Panc1 (cell line): ENCODE measurements at regions of chr14 and their contacts with region 1.

Region 1: DNA sequence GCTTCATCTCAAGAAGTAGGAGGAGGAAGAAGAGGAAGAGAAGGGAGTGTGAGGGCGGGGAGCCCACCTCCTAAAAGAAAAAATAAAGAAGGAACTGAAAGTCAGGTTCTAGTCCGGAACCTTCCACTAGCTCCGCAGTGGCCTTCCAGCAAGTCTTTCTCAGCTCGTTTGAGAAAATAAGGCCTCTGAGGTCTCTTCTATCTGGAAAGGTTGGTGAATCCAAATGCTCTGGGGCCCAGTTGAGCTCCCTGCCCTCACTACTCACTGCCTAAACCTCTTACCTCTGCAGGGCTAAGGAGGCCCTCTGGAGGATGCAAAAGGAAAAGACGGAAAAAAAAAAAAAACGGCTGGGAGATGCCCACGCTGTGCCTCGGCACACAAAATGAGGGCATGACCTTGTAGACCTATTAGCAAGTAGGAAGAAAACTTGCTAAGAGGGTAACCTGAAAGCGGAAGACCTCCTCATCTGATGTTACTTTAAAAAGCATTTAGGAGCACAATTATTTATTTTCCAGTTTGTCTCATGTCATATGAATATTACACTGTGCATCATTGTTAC is 35.9 kb downstream of the FBLN5 start:
- DNase-seq: no peak
- ATAC-seq: peak; percentile 82
- H3K4me3 ChIP-seq: no peak overlapping the region
- H3K27ac ChIP-seq: no peak overlapping the region
- H3K4me1 ChIP-seq: no peaks in the 10 kb centered on the region
- H3K27me3 ChIP-seq: no peaks in the 10 kb centered on the region
- CTCF ChIP-seq: peak; percentile 75

Region 2: GRCh38 chr14:91510174-91511042 is 401.1 kb before region 1 on chr14 and contains the start of gene PPP4R3A:
- CTCF ChIA-PET with region 1: no interaction called
- POLR2A ChIA-PET with region 1: no interaction called
- in situ Hi-C with region 1: no loop called
- intact Hi-C with region 1: loop called (anchors 5 kb)
- DNase-seq: peak; percentile 60
- ATAC-seq: peak; percentile 95
- H3K4me3 ChIP-seq: peak within 1 kb of the TSS; percentile 84 to 90
- H3K27ac ChIP-seq: peak within 1 kb of the TSS; percentile 92
- H3K4me1 ChIP-seq: no peaks in the 10 kb centered on the region; the same call in 1 of the 2 replicates
- H3K27me3 ChIP-seq: no peaks in the 10 kb centered on the region
- CTCF ChIP-seq: no peak
- total RNA-seq, gene PPP4R3A: 54.8 TPM

Region 3: DNA sequence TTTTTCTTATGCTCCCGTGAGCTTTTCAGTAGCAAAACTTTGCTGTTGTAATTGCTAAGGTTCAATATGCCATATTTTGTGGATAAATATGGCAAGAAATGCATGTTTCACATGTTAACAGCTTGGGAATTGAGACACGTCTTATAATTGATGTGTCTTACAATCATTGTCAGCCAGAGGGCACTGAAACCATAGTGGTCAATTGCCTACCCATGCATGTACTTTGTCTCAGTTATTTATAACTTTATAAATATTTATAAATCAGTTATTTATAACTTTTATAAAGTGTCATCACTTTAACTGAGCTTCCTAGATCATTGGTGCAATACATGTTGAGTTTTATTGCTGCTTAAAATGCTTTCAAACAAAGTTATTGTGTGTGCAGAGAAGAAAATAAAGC is 261.6 kb before region 1 on chr14:
- CTCF ChIA-PET with region 1: no interaction called
- POLR2A ChIA-PET with region 1: no interaction called
- in situ Hi-C with region 1: no loop called
- intact Hi-C with region 1: loop called (anchors 5 kb)
- DNase-seq: no peak
- ATAC-seq: no peak
- H3K4me3 ChIP-seq: no peak overlapping the region
- H3K27ac ChIP-seq: no peak overlapping the region
- H3K4me1 ChIP-seq: no peaks in the 10 kb centered on the region
- H3K27me3 ChIP-seq: no peaks in the 10 kb centered on the region
- CTCF ChIP-seq: peak; percentile 42; the same call in 1 of the 2 replicates

Region 4: DNA sequence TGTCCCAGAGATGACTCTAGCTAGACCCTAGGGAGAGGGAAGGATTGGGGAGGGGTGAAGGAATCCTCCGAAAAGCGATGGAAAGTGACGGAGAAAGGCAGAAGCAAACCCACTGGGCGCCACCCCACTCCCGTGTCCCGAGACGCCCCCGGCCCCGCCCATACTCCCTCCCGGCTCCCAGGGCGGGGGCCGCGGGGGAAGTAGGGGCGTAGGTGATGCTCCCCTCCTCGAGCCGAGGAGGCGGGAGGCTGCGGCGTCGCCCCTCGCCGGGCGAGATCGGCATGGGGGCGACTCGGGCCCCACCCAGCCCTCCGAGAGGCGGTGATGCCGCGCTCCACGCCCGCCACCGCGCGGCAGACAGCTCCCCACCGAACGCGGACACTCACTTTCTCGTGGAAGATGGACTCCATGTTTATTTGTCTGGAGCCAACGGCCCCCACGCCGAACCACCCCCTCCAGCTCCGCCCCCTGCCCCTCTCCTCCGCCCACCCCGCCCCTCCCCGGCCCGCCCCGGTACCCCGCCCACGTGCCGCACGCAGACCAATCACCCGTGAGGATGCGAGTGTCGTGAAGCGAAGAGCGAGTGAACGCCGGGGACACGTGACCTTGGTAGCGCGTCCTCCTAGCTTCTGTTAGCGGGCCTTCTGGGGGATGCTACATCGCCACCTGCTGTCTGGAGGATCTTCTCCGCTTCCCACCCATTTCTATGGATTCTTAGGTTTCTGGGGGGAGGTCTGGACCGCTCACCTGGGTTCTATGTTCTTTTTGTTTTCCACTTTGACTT is 194.8 kb after region 1 on chr14 and contains the start of gene ATXN3:
- CTCF ChIA-PET with region 1: no interaction called
- POLR2A ChIA-PET with region 1: no interaction called
- in situ Hi-C with region 1: no loop called
- intact Hi-C with region 1: no loop called
- DNase-seq: peak; percentile 83
- ATAC-seq: peak; percentile 98
- H3K4me3 ChIP-seq: peak within 1 kb of the TSS; percentile 94 to 95
- H3K27ac ChIP-seq: peak within 1 kb of the TSS; percentile 90
- H3K4me1 ChIP-seq: peaks cover 9% of the 10 kb centered on the region; the same call in 1 of the 2 replicates
- H3K27me3 ChIP-seq: no peaks in the 10 kb centered on the region
- CTCF ChIP-seq: peak; percentile 84
- total RNA-seq, gene ATXN3: 14.6 TPM